ENCODE measurements at regions of chr4 and their contacts with region 1.

Region 1: DNA sequence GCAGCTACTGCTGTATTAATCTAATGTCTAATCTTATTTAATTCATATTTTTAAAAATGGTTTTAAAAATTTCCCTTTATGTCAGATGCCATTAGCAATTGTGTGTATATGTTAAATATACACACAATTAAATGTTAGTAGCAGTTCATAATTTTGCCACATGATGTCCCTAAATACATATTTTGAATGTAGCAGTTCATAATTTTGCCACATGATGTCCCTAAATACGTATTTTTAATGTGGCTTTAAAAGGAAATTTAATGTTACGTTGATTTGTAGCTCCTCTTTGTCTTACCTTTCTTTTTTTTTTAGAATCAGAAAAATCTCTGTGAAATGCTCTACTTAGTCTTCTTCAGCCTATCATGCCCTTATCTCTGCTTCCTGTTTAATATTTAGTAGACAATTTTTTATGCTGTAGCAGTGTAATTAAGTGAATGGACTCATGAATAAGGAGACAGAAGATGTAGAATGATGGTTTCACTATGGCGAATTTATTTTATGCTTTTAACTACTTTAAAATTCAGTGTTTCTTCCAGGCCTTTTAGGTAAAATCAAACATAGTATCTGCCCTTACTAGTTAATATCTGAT is 26.1 kb downstream of the RBM46 start:
- DNase-seq: no peak
- H3K4me3 ChIP-seq: no peak overlapping the region
- H3K27me3 ChIP-seq: no peaks in the 10 kb centered on the region
- CTCF ChIP-seq: peak; percentile 60

Region 2: DNA sequence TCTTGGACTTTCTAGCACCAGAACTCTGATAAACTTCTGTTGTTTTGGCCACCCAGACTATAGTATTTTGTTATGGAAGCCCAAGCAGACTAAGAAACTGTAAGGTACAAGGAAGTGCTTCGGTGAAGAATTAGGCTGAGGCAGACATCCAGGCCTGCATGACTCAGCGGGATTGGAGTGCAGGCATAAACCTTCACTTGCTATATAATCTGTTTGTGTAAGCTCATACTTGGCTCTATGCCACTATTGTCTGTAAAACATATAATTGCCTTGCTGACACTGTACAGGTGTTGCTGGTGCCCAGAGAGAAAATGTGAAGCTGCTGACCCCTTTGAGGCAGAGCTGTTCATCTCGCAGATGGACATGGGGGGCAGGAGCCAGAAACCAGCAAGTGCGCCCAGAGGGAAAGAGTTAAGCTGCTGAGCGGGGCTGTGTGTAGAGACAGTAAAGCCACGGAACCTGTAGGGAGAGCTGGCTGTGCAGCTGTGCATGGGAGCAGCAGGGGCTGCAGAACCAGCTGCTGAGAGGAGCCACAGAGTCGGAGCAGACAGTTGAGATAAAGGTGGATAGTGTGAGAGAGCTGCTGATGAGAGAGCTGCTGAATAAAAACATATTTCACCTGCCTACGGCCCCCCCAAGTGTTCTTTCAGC is 70.1 kb after region 1 on chr4:
- CTCF ChIA-PET with region 1: no interaction called
- POLR2A ChIA-PET with region 1: no interaction called
- DNase-seq: no peak
- H3K4me3 ChIP-seq: no peak overlapping the region
- H3K27me3 ChIP-seq: no peaks in the 10 kb centered on the region
- CTCF ChIP-seq: no peak

Region 3: GRCh38 chr4:154911097-154911496 is 104.0 kb after region 1 on chr4:
- CTCF ChIA-PET with region 1: interaction called, 18 read pairs
- POLR2A ChIA-PET with region 1: no interaction called
- DNase-seq: no peak
- H3K4me3 ChIP-seq: no peak overlapping the region
- H3K27me3 ChIP-seq: no peaks in the 10 kb centered on the region
- CTCF ChIP-seq: 0 out of 2 replicates have a peak, but pooled peaks have one; percentile 19

Region 4: DNA sequence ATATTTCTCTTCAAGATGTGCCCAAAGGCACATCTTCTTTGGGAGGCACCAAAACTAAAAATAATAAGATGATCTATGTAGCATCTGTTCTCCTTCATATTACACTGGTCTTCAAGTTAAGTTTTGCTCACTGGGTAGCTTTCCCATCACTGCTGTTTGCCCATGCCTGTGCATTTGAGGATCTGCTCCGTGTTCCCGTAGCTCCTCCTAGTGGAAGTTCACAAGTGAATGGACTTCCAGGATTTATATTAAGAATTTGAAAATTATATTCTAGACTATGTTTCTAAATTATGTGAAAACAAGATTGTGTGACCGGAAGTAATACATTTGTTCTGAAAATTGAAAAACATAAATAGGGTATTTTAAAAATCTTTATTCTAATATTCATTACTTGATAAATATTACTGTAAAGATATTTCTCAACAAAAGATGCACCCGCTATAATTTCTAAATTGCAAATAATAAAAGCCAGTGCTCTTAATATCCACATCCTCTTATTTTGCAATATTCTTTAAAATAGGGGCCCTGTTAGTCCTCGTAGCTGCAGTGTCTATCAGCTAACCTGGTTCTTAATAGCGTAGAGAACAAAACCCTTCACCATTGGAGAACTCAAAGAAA is 121.6 kb after region 1 on chr4:
- CTCF ChIA-PET with region 1: interaction called, 89 read pairs
- POLR2A ChIA-PET with region 1: no interaction called
- DNase-seq: peak; percentile 4
- H3K4me3 ChIP-seq: no peak overlapping the region
- H3K27me3 ChIP-seq: no peaks in the 10 kb centered on the region
- CTCF ChIP-seq: peak; percentile 62